ENCODE measurements at regions of chr11 and their contacts with region 1.

Region 1: GRCh38 chr11:75204685-75205563 is 35.6 kb upstream of the TPBGL start:
- DNase-seq: peak; percentile 93
- ATAC-seq: peak; percentile 99
- H3K4me3 Mint-ChIP-seq: no peak overlapping the region
- H3K27ac Mint-ChIP-seq: no peak overlapping the region
- H3K4me1 Mint-ChIP-seq: no peaks in the 10 kb centered on the region
- H3K27me3 Mint-ChIP-seq: peaks cover 1% of the 10 kb centered on the region
- CTCF ChIP-seq: peak; percentile 87

Region 2: DNA sequence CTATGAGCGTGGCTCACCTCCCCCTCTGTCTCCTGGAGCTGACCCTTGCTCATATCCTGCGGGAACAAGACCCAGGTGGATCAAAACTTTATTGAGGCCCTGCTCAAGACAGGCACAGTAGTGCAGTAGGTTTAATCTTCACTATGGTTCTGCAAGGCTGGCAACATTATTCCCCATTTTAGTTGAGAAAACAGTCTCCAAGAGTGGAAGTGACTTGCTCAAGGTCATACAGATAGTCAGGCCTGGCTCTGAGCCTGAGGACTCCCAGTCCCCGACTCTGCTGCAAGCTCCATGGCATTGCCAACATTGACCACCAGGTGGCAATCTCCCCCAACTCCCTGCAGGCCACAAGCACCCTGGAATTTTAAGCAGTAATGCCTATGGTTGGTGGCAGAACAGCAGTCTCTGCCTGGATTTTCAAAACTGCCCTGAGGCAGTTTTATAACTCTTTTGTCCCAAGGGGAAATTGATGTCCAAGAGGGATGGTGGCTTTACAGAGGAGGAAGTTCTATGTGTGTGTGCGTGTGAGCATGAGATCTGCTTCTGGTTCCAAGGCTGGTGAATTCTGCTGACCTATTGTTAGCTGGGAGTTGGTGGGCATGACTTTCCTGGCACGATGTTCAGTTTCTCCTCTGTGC is 182.0 kb before region 1 on chr11:
- CTCF ChIA-PET with region 1: interaction called, 31 read pairs
- POLR2A ChIA-PET with region 1: no interaction called
- intact Hi-C with region 1: loop called (anchors 10 kb)
- DNase-seq: peak; percentile 82
- ATAC-seq: peak; percentile 94
- H3K4me3 Mint-ChIP-seq: no peak overlapping the region
- H3K27ac Mint-ChIP-seq: no peak overlapping the region
- H3K4me1 Mint-ChIP-seq: no peaks in the 10 kb centered on the region
- H3K27me3 Mint-ChIP-seq: no peaks in the 10 kb centered on the region
- CTCF ChIP-seq: peak; percentile 98

Region 3: DNA sequence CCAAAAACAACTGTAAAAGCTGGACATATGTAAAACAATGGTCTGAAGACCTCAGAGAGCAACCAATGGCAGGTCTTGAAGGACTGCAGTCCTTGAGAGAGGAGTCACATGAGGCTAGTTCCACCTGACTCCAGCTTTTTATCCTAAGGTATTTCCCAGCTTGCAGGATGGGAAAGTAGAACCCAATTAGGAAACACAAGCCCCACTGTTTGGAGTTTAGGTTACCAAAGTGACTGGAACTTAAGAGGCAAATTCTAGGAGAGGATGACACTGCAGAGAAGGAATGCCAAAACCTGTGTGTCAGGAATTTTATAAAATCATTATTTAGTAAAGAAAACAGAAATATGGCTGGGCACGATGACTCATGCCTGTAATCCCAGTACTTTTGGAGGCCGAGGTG is 126.7 kb before region 1 on chr11:
- CTCF ChIA-PET with region 1: no interaction called
- POLR2A ChIA-PET with region 1: no interaction called
- intact Hi-C with region 1: no loop called
- DNase-seq: no peak
- ATAC-seq: no peak
- H3K4me3 Mint-ChIP-seq: no peak overlapping the region
- H3K27ac Mint-ChIP-seq: no peak overlapping the region
- H3K4me1 Mint-ChIP-seq: no peaks in the 10 kb centered on the region
- H3K27me3 Mint-ChIP-seq: peaks cover 12% of the 10 kb centered on the region
- CTCF ChIP-seq: no peak

Region 4: GRCh38 chr11:75223954-75224643 is 19.2 kb after region 1 on chr11:
- CTCF ChIA-PET with region 1: interaction called, 30 read pairs
- POLR2A ChIA-PET with region 1: no interaction called
- intact Hi-C with region 1: no loop called
- DNase-seq: no peak
- ATAC-seq: no peak
- H3K4me3 Mint-ChIP-seq: no peak overlapping the region
- H3K27ac Mint-ChIP-seq: no peak overlapping the region
- H3K4me1 Mint-ChIP-seq: no peaks in the 10 kb centered on the region
- H3K27me3 Mint-ChIP-seq: no peaks in the 10 kb centered on the region
- CTCF ChIP-seq: no peak

Region 5: DNA sequence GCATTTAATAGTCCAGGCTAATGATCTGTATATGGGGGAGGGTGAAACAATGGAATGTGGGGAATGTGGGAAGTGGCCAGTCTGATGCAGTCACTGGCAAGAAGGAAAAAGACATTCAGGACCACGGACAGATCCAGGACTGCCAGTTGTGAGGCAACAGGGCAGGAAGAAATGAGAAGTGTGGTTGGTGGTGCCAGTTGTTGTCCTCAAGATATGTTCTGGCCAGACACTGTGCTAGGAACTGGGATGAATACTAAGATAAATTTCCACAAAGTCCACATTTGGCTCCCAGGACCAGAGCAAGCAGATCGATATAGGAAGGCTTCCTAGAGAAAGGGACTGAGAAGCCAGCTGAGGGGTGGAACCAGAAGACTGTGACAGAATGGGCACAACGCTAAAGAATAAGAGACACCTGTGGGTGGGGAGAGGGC is 28.8 kb after region 1 on chr11:
- CTCF ChIA-PET with region 1: interaction called, 12 read pairs
- POLR2A ChIA-PET with region 1: no interaction called
- intact Hi-C with region 1: no loop called
- DNase-seq: peak; percentile 40
- ATAC-seq: no peak
- H3K4me3 Mint-ChIP-seq: no peak overlapping the region
- H3K27ac Mint-ChIP-seq: no peak overlapping the region
- H3K4me1 Mint-ChIP-seq: no peaks in the 10 kb centered on the region
- H3K27me3 Mint-ChIP-seq: peaks cover 5% of the 10 kb centered on the region
- CTCF ChIP-seq: no peak

Region 6: DNA sequence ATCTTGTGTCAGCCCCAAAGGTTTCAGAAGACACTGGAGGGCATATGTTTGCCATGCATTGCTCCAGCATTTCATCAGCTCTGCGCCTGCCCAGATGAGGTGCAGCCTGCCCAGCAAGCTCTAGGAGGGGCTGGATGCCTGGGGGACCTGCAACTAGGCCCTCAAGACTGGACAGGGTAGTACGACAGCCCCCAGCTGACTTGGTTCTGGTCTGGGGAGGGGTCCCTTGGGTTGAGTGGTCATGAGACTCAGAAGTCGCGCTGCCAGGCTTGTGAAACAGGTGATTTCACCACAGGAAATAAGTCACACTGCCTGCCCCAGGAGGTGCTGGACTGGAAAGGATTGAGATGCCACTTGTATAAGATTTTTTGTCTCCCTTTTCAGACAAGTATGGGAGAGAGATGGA is 59.0 kb after region 1 on chr11:
- CTCF ChIA-PET with region 1: no interaction called
- POLR2A ChIA-PET with region 1: no interaction called
- intact Hi-C with region 1: no loop called
- DNase-seq: peak; percentile 52
- ATAC-seq: peak; percentile 61
- H3K4me3 Mint-ChIP-seq: no peak overlapping the region
- H3K27ac Mint-ChIP-seq: peak overlapping the region; percentile 23
- H3K4me1 Mint-ChIP-seq: peaks cover 41% of the 10 kb centered on the region
- H3K27me3 Mint-ChIP-seq: no peaks in the 10 kb centered on the region
- CTCF ChIP-seq: no peak

Measured in activated CD8-positive, alpha-beta T cell treated with anti-CD3 and anti-CD28 coated beads for 36 hours (primary cell).